Posterior cingulate gyrus (tissue), 11 donors: ENCODE measurements at regions of chr1 and their contacts with region 1.

Region 1: GRCh38 chr1:181479137-181479745 is 4.1 kb upstream of the CACNA1E start:
- DNase-seq: peak in 8 of 10 donors; percentile 45 to 93 (median 61)

Region 2: DNA sequence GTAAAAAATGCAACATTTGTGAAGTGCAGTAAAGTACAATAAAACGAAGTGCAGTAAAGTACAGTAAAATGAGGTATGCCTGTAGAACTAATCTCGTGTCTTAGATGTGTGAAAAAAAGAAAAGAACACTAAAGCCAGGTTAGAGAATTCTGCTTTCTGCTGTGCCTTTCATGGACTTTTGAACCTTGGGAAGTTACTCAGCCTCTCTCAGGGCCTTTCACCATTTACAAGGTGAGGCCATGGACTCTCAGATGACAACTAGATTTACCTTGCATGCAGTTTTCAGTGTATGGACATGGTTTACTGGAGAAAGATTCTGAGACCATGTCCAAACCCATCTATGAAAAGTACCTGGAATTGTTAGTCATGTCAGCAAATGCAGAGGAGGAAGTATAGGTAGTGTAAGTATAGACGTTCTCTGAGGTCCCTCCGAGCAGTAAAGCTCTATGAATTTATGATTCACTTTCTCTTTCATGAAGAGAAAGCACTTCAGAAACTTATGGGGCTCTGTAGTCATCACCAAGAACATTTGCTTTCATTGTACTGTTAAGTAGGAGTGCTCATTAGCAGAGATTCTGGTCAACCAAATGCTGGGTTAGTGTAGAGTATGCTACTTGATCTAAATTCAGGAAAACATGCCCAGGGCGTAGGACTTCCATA is 147.2 kb after region 1 on chr1:
- intact Hi-C with region 1: no loop called
- DNase-seq: no peak

Region 3: GRCh38 chr1:181676269-181676668 is 197.0 kb after region 1 on chr1:
- intact Hi-C with region 1: loop called (anchors 1 kb)
- DNase-seq: peak in 7 of 10 donors; percentile 27 to 89 (median 51)

Region 4: DNA sequence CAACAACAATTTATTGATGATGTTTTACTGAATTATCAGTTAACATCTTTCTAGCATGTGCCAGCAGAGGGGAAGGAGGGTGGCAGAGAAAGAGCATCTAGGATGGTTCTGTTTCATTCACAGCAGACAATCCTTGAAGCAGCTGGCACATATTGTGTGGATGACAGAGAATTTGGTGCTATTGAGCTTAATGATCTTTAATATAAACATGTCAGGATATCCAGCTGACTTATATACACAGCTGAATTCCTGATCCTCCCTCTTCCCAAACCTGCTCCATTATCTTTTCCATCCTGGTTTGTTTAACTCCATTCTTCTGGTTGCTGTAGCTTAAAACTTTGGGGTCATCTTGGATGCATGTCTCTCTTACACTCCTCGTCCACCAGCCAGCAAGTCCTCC is 222.7 kb after region 1 on chr1:
- intact Hi-C with region 1: no loop called
- DNase-seq: no peak

Region 5: GRCh38 chr1:181936768-181937581 is 457.7 kb after region 1 on chr1:
- intact Hi-C with region 1: loop called (anchors 2 kb)
- DNase-seq: peak; percentile 34 to 93 (median 58)

Region 6: GRCh38 chr1:182054698-182055326 is 575.6 kb after region 1 on chr1:
- intact Hi-C with region 1: loop called (anchors 1 kb)
- DNase-seq: peak in 3 of 10 donors; percentile 28 to 50 (median 37)

Region 7: DNA sequence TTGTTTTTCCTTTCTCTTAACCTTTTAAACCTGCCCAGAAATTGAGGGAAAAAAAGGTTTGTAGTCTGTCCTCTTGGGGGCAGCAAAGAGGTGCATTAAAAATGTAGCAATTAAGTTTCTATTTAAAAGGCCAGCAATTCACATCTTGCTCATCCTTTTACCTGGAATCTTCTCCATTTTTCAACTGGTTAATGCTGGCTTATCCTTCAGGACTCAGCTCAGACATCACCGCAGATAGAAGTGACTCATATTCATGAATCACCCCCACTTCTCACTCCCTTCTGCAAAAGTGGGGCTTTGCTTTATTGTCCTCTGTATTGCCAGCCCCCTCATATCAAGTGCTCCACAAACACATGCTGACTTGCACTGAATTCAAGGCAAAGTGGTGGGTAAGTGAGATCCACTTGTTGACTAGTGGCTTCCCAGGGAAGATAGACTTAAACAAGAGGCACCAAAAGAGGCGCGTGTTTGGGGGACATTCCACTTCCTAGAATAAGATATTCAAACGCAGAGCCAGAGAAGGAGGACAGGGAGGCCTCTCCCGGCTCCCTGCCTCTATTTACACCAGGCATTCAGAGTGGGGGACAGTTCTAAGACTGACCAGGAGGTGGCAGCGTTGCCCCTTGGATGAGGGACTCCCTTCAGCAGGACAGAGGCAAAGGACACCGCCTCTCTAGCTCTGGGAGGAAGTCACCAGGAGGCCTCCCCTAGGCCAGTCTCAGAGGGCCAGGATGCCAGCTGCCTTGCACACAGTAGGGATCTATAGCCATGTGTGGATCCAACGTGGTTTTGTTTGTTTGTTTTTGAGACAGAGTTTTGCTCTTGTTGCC is 605.5 kb after region 1 on chr1:
- intact Hi-C with region 1: loop called (anchors 1 kb)
- DNase-seq: peak; percentile 77 to 98 (median 92)

Region 8: DNA sequence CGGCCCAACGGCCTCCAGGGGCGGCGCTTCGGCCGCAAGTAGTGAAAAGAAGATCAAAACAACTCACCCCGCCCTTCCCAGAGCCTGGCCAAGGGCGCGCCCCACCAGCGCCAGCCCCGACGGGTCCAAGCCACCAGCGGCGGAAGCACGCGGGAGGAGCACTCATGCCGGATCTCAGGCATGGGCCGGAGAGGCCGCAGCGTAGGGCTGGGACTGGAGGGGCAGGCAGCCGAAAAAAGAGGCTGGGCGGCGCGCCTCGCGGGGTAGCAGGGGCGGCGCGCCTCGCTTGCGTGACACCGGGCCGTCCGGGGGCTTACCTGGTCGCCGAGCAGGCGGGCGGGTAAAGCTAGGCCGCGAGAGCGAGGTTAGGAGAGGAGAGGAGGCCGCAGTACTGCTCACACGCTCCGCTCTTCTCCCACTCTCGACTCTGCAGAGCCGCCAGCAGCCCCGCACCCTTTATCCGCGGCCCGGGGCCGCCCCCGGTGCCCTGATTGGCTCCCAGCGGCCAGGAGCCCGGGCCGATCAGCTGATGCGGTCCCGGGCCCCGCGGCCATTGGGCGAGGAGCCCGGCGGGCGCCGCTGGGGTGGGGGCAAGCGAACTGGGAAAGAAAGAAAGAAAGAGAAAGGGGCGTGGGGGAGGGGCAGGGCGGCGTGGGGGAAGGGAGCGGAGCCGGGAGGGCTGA is 912.3 kb after region 1 on chr1 and contains the start of gene GLUL:
- intact Hi-C with region 1: loop called (anchors 10 kb)
- DNase-seq: peak; percentile 86 to 99 (median 92)